CD4-positive, alpha-beta memory T cell (primary cell): ENCODE measurements at regions of chr11 and their contacts with region 1.

Region 1: GRCh38 chr11:128757235-128757711 is 63.4 kb downstream of the FLI1 start:
- DNase-seq: peak; percentile 64 to 85 (median 72)
- H3K4me3 ChIP-seq: no peak overlapping the region
- H3K4me3 Mint-ChIP-seq: peak overlapping the region in 6 of 8 donors; percentile 8 to 82 (median 54)
- H3K27ac ChIP-seq: peak overlapping the region; percentile 34
- H3K27ac Mint-ChIP-seq: peak overlapping the region; percentile 77 to 96 (median 94)
- H3K4me1 ChIP-seq: peaks cover 70% of the 10 kb centered on the region
- H3K4me1 Mint-ChIP-seq: peaks cover 59 to 87% (median 76%) of the 10 kb centered on the region in 4 donors
- H3K27me3 ChIP-seq: no peaks in the 10 kb centered on the region
- H3K27me3 Mint-ChIP-seq: no peaks in the 10 kb centered on the region

Region 2: DNA sequence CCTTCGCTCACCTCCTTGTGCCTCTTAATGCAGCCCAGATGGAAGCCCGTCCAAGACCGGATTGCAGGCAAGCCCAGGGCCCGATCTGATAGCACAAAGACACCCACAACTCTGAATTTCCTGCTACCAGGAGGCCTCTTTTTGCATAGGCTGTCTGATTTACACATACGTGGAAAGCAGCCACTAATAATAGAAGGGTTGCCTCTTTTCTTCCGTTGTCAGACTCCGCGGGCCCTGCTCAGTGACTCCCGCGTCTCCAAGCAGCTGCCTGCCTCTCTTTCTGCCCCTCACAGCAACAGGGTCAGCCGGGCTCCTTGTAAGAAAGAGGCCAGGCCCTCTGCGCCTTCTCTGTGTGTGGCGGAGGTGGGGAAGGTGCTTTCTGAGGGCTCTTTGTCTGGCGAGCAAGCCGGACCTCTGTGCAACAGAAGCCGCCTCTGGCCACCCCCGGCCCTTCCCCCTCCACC is 36.7 kb before region 1 on chr11:
- CTCF ChIA-PET with region 1: interaction called, 8 read pairs
- POLR2A ChIA-PET with region 1: interaction called, 7 read pairs
- intact Hi-C with region 1: loop called (anchors 1 kb)
- DNase-seq: peak; percentile 49 to 66 (median 52)
- H3K4me3 ChIP-seq: peak overlapping the region in 1 of 2 donors; percentile 11
- H3K4me3 Mint-ChIP-seq: peak overlapping the region; percentile 80 to 94 (median 84)
- H3K27ac ChIP-seq: peak overlapping the region; percentile 47
- H3K27ac Mint-ChIP-seq: peak overlapping the region; percentile 91 to 98 (median 94)
- H3K4me1 ChIP-seq: peaks cover 100% of the 10 kb centered on the region
- H3K4me1 Mint-ChIP-seq: peaks cover 89 to 100% (median 97%) of the 10 kb centered on the region in 4 donors
- H3K27me3 ChIP-seq: no peaks in the 10 kb centered on the region
- H3K27me3 Mint-ChIP-seq: peaks cover 0 to 2% of the 10 kb centered on the region in 2 donors

Region 3: DNA sequence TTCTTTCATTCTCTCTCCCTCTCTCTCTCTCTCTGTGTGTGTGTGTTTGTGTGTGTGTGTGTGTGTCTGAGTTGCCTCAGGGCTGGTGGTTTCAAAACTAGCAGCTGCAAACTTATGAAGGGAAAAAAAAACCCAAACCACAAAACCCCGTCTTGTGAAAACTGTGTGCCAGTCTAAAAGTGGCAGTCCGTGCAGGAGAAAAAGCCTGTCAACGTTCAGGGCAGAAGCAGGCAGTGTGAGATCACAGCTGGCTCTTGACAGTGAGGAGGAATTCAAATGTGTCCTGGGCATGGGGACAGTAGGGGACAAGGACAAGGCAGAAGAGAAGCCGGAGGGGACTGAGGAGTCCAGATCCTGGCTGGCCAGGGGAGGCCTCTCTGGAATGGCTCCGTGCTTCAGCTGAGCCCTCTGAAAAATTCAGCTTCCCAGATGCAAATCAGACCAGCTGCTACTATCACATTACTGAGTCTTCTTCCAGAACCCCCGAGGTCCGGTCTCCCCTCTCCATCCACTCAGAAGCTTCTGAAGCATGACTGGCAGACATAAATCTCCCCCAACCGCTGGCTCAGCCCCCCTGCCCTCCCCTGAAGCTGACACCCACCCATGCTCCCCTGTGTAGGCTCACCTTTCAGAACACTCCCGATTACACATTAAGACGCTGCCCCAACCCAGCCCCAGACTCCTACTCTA is 31.5 kb before region 1 on chr11:
- CTCF ChIA-PET with region 1: interaction called, 8 read pairs
- POLR2A ChIA-PET with region 1: interaction called, 5 read pairs
- intact Hi-C with region 1: loop called (anchors 2 kb)
- DNase-seq: peak; percentile 84 to 89 (median 88)
- H3K4me3 ChIP-seq: peak overlapping the region; percentile 55 to 58
- H3K4me3 Mint-ChIP-seq: peak overlapping the region; percentile 78 to 92 (median 87)
- H3K27ac ChIP-seq: peak overlapping the region; percentile 49
- H3K27ac Mint-ChIP-seq: peak overlapping the region; percentile 91 to 98 (median 95)
- H3K4me1 ChIP-seq: peaks cover 99% of the 10 kb centered on the region
- H3K4me1 Mint-ChIP-seq: peaks cover 87 to 100% (median 97%) of the 10 kb centered on the region in 4 donors
- H3K27me3 ChIP-seq: no peaks in the 10 kb centered on the region
- H3K27me3 Mint-ChIP-seq: peaks cover 0 to 3% of the 10 kb centered on the region in 2 donors

Region 4: DNA sequence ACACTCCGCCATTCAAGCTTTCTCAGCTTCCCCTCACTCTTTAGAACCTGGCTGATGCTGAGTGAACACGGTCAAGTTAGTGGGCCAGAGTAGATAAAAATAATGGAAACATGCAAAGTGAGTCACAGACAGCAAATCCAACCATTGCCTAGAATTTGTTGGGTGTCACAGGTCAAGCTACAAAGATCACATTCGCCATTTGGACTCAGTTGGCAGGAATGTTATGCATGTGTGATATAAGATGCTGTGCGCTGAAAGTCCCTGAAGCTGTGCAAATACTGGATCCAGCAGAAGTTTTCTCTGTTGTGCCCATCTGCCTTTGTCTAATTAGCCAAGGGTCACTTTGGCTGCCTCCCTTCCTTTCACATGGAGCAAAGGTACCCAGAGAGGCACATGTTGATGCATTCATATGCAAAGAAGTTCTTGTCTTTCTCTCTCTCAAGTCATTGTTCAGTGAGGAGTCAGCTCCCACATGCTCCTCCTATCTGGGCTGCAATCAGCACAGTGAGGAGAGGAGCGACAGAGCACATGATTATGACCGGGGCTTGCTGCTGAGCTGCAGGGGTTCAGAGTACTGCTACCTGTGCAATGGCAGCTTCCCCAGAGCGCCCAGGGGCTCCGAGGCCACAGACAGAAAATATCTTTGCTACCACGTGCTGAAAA is 23.7 kb before region 1 on chr11:
- CTCF ChIA-PET with region 1: interaction called, 18 read pairs
- POLR2A ChIA-PET with region 1: interaction called, 5 read pairs
- intact Hi-C with region 1: loop called (anchors 1 kb)
- DNase-seq: peak in 2 of 5 donors; percentile 30 to 70
- H3K4me3 ChIP-seq: peak overlapping the region; percentile 8 to 32
- H3K4me3 Mint-ChIP-seq: peak overlapping the region; percentile 74 to 94 (median 84)
- H3K27ac ChIP-seq: peak overlapping the region; percentile 27
- H3K27ac Mint-ChIP-seq: peak overlapping the region; percentile 80 to 97 (median 88)
- H3K4me1 ChIP-seq: peaks cover 100% of the 10 kb centered on the region
- H3K4me1 Mint-ChIP-seq: peaks cover 82 to 100% (median 94%) of the 10 kb centered on the region in 4 donors
- H3K27me3 ChIP-seq: no peaks in the 10 kb centered on the region
- H3K27me3 Mint-ChIP-seq: no peaks in the 10 kb centered on the region

Region 5: DNA sequence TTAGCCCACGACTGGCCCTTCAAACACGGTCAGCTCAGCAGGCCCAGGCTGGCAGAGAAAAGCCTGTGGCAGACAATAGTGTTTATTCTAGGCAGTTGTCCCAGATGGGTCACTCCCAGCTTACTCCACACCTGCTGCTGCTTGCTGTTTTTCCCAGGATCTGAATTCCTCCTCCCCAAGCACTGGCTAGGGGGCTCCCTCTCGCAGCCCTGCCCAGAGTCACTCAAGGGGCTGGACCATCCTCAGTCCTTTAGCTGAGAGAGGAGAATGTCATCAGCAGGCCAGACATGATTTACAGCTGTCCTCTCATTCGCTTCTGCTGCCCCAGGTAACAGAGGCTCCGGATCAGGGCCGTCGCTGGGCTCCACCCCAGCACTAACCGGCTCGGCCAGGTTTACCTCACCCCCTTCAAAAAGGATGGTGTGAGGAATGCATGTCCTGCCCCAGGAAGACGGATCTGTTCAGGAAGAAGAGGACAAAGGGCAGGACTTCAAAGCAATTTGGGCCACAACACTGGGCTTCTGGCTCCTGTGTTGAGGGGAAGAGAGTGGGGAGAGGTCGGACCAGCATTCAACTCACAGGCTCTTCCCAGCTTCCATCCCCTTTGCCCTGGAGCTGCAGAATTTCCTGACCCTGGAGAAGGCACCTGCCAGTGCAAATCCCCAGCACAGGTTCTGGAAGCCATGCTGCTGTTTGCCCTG is 558.7 kb after region 1 on chr11:
- CTCF ChIA-PET with region 1: no interaction called
- POLR2A ChIA-PET with region 1: no interaction called
- intact Hi-C with region 1: no loop called
- DNase-seq: no peak
- H3K4me3 ChIP-seq: no peak overlapping the region
- H3K4me3 Mint-ChIP-seq: no peak overlapping the region
- H3K27ac ChIP-seq: no peak overlapping the region
- H3K27ac Mint-ChIP-seq: peak overlapping the region in 1 of 7 donors; percentile 52
- H3K4me1 ChIP-seq: no peaks in the 10 kb centered on the region
- H3K4me1 Mint-ChIP-seq: peaks cover 0 to 6% (median 2%) of the 10 kb centered on the region in 4 donors
- H3K27me3 ChIP-seq: no peaks in the 10 kb centered on the region
- H3K27me3 Mint-ChIP-seq: peaks cover 0 to 1% of the 10 kb centered on the region in 2 donors